CD14-positive monocyte (primary cell): ENCODE measurements at regions of chr1 and their contacts with region 1.

Region 1: DNA sequence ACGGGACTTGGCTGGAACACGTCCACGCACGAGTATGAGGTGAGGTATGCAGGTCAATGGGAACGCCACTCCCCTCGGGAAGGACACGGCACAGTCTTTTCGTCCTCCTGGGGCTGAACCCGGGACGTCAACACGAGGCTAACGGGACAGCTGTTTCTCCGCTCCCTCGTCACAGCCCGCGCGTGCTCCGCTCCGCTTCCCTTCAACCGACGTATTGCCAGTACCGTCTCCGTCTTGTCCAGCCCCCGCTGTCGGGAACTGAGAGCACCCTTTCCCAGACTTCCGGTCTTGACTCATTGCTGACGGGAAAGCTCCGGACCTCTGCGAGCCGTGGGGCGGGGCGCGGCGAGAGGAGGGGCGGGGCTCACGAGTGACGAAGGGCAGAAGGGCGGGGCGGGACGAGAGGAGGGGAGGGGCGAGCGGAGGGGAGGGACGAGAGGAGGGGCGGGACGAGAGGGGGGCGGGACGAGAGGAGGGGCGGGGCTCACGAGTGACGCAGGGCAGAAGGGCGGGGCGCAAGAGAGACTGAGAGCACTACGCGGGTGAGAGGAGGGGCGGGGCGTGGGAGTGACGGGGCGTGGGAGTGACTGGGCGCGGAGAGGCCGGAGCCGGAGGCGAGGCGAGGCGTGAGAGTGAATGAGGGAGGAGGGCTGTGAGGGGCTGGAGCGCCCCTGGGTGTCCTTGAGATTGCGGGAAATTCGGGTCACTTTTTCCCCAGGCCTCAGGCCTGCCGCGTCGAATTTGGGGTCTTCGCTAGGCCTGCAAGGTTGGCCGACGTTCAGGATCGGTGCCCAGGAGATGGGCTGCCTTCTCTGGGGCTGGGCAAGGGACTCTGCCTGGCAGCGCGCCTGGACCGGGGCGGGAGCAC is 22.2 kb upstream of the CFAP126 start:
- DNase-seq: peak; percentile 98 to 99 (median 99)
- H3K4me3 ChIP-seq: peak overlapping the region; percentile 61 to 72 (median 64)
- H3K4me3 Mint-ChIP-seq: peak overlapping the region; percentile 78 to 89
- H3K27ac ChIP-seq: peak overlapping the region; percentile 96 to 98
- H3K27ac Mint-ChIP-seq: peak overlapping the region; percentile 94 to 97 (median 97)
- H3K4me1 ChIP-seq: peaks cover 12 to 23% of the 10 kb centered on the region in 2 donors
- H3K4me1 Mint-ChIP-seq: peaks cover 21% of the 10 kb centered on the region
- H3K27me3 ChIP-seq: no peaks in the 10 kb centered on the region
- H3K27me3 Mint-ChIP-seq: peaks cover 0 to 10% (median 8%) of the 10 kb centered on the region in 3 donors
- CTCF ChIP-seq: no peak

Region 2: DNA sequence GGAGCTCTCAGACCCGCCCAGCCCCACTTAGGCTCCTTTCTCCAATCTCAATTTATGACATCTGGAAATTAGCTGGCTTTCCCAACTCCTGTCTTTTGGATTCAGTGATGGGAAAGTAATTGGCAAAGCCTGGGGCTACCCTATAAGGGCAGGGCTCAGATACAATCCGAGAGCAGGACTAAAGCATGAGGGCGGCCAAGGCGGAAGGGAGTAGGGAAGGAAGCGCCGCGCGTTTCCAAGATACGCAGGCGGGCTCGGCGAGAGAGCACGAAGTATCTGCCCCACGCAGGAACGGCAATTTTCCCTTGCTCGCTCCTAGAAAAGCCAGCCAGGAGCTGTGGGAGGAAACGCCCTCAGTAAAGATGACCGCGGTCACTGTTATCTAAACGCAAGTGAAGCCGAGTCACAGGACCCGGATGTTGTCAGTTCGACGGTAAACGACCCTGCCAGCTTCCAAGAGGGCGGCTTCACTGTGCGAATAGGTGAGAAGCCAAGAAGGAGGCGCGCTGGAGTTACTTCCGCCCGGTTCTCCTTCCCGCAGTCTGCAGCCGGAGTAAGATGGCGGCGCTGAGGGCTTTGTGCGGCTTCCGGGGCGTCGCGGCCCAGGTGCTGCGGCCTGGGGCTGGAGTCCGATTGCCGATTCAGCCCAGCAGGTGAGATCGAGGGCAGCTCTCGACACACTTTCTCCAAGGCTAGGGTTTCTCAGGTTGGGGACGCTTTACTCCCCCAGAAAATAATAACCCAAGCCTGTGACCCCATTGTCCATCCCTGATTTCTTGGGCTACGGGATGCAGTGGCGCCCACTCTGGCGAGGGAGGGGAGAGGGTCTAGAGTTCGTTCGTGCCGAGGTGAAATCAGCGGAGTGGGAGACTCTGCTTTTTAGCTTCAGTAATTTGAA is 187.8 kb before region 1 on chr1 and contains the start of gene NDUFS2:
- intact Hi-C with region 1: loop called in 1 of 2 experiments (anchors 5 kb)
- DNase-seq: peak; percentile 97 to 99 (median 99)
- H3K4me3 ChIP-seq: peak within 1 kb of the TSS; percentile 90 to 100 (median 91)
- H3K4me3 Mint-ChIP-seq: peak within 1 kb of the TSS; percentile 84 to 93
- H3K27ac ChIP-seq: peak within 1 kb of the TSS; percentile 80 to 95
- H3K27ac Mint-ChIP-seq: peak within 1 kb of the TSS; percentile 93 to 98 (median 97)
- H3K4me1 ChIP-seq: peaks cover 34 to 47% of the 10 kb centered on the region in 2 donors
- H3K4me1 Mint-ChIP-seq: peaks cover 49% of the 10 kb centered on the region
- H3K27me3 ChIP-seq: no peaks in the 10 kb centered on the region
- H3K27me3 Mint-ChIP-seq: peaks cover 0 to 1% (median 0%) of the 10 kb centered on the region in 3 donors
- CTCF ChIP-seq: no peak
- polyA plus RNA-seq, gene NDUFS2: 87.5 to 119 (median 101) TPM

Region 3: DNA sequence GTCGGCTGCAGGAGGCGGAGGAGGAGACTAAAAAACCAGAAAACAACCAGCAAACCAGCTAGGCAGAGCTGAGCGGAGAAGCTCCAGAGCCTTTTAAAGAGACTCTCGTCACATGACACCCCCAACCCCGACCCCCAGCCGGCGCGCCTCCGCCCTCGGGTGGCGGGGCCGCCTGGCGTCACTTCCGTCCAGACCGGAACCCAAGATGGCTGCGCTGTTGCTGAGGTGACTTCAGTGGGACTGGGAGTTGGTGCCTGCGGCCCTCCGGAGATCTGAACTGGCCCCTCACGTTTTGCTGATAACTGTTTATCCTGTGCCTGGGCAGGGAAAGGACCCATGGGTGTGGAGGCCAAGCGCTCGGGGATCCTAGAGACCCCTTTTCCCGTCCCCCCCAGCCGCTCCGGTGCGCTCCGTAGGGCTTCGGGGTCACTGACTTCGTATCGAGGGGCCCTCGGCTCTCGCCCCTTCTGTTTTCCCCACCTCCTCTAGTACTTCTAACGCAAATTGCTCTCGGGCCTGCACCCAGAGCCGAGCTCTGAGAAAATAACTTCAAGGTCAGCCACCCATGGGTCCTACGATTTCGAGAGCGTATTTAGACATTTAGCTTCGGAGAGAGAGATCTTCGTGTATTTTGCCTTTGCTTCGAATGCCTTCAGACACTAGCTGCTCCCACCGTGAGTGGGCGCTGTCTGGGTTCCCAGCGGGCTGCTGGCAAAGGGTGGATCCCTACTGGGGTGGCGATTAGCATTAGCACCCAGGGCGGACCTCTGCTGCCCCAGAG is 75.5 kb before region 1 on chr1 and contains the start of gene SDHC:
- intact Hi-C with region 1: loop called in 1 of 2 experiments (anchors 10 kb)
- DNase-seq: peak; percentile 87 to 88 (median 87)
- H3K4me3 ChIP-seq: peak within 1 kb of the TSS; percentile 70 to 97 (median 91)
- H3K4me3 Mint-ChIP-seq: peak within 1 kb of the TSS; percentile 97 to 98
- H3K27ac ChIP-seq: peak within 1 kb of the TSS; percentile 86 to 99
- H3K27ac Mint-ChIP-seq: peak within 1 kb of the TSS; percentile 98 to 100 (median 99)
- H3K4me1 ChIP-seq: peaks cover 11 to 17% of the 10 kb centered on the region in 2 donors
- H3K4me1 Mint-ChIP-seq: peaks cover 20% of the 10 kb centered on the region
- H3K27me3 ChIP-seq: no peaks in the 10 kb centered on the region
- H3K27me3 Mint-ChIP-seq: peaks cover 1 to 5% (median 2%) of the 10 kb centered on the region in 3 donors
- CTCF ChIP-seq: peak; percentile 46
- polyA plus RNA-seq, gene SDHC: 208 to 350 (median 323) TPM

Region 4: DNA sequence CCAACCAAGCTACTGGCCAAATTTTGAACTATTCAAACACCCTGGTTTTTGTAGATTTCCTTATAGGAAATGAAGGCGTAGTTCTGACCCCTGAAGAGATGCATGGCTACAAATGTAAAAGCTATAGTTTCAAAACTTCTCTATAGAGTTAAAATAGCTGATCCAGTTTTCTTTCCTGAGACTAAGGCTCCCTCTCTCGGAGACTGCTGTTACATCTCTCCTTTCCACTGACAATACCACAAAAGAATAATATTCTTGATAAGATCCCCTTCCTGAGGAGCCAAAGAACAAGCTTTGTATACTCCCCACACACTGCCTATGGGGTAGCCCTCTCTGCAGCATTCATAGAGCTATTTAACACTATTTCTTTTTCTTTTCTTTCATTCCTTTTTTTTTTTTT is 15.6 kb before region 1 on chr1:
- intact Hi-C with region 1: no loop called
- DNase-seq: no peak
- H3K4me3 ChIP-seq: no peak overlapping the region
- H3K4me3 Mint-ChIP-seq: no peak overlapping the region
- H3K27ac ChIP-seq: no peak overlapping the region
- H3K27ac Mint-ChIP-seq: no peak overlapping the region
- H3K4me1 ChIP-seq: no peaks in the 10 kb centered on the region
- H3K4me1 Mint-ChIP-seq: no peaks in the 10 kb centered on the region
- H3K27me3 ChIP-seq: no peaks in the 10 kb centered on the region
- H3K27me3 Mint-ChIP-seq: peaks cover 0 to 7% (median 1%) of the 10 kb centered on the region in 3 donors
- CTCF ChIP-seq: no peak